Endothelial cell of umbilical vein (primary cell): ENCODE measurements at regions of chr1 and their contacts with region 1.

Region 1: GRCh38 chr1:23809751-23810171 is 9.2 kb upstream of the GALE start:
- DNase-seq: peak; percentile 74
- H3K4me3 ChIP-seq: no peak overlapping the region
- H3K27ac ChIP-seq: no peak overlapping the region
- H3K4me1 ChIP-seq: no peaks in the 10 kb centered on the region
- H3K27me3 ChIP-seq: no peaks in the 10 kb centered on the region
- CTCF ChIP-seq: peak; percentile 88 to 91
- POLR2A ChIP-seq: no peak

Region 2: GRCh38 chr1:23751050-23751814 is 58.5 kb before region 1 on chr1:
- CTCF ChIA-PET with region 1: no interaction called
- POLR2A ChIA-PET with region 1: no interaction called
- dilution Hi-C with region 1: no loop called
- intact Hi-C with region 1: no loop called
- DNase-seq: peak; percentile 46
- H3K4me3 ChIP-seq: no peak overlapping the region
- H3K27ac ChIP-seq: no peak overlapping the region
- H3K4me1 ChIP-seq: no peaks in the 10 kb centered on the region
- H3K27me3 ChIP-seq: no peaks in the 10 kb centered on the region
- CTCF ChIP-seq: peak; percentile 63 to 80
- POLR2A ChIP-seq: no peak

Region 3: DNA sequence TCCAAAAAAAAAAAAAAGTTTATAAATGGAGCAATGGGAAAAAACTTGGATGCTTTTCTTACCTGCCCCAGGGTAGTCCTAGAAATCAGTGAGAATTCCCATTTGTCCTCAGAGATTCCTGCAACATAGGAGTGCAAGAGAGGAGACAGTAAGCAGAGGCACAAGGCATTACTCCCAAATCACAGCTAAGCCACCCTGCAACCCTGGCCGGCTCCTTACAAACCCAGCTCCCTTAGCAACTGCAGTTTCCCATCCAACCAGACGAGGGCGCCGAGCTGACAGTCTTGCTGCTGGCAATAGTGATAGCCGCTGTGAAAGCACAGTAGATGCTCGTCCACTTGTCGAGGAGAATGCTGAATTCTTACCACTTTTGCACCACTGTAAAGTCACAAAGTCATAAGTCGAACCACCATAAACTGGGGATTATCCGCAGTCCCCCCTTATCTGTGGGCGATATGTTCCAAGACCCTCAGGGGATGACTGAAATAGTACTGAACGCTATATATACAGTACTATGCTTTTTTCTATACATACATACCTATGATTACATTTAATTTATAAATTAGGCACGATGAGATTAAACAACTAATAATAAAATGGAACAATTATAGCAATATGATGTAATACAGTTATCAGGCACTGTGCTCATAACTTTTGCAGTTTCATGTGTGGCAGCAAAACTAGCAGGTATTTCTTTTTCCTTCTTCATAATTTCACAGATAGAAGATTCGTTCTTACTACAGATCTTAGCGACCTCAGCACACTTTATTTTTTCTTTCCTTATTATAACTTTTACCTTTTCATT is 37.5 kb before region 1 on chr1:
- CTCF ChIA-PET with region 1: interaction called, 28 read pairs
- POLR2A ChIA-PET with region 1: no interaction called
- dilution Hi-C with region 1: no loop called
- intact Hi-C with region 1: no loop called
- DNase-seq: peak; percentile 81
- H3K4me3 ChIP-seq: no peak overlapping the region
- H3K27ac ChIP-seq: no peak overlapping the region
- H3K4me1 ChIP-seq: peaks cover 2% of the 10 kb centered on the region
- H3K27me3 ChIP-seq: no peaks in the 10 kb centered on the region
- CTCF ChIP-seq: peak; percentile 94 to 97
- POLR2A ChIP-seq: no peak

Region 4: GRCh38 chr1:23825076-23825761 is 15.5 kb after region 1 on chr1 and contains the start of gene HMGCL:
- CTCF ChIA-PET with region 1: interaction called, 23 read pairs
- POLR2A ChIA-PET with region 1: interaction called, 4 read pairs
- dilution Hi-C with region 1: no loop called
- intact Hi-C with region 1: loop called (anchors 1 kb)
- DNase-seq: peak; percentile 91
- H3K4me3 ChIP-seq: peak within 1 kb of the TSS; percentile 91 to 99 (median 99)
- H3K27ac ChIP-seq: peak within 1 kb of the TSS; percentile 76
- H3K4me1 ChIP-seq: peaks cover 9% of the 10 kb centered on the region
- H3K27me3 ChIP-seq: no peaks in the 10 kb centered on the region
- CTCF ChIP-seq: no peak
- POLR2A ChIP-seq: peak; percentile 95
- total RNA-seq, gene HMGCL: 23.9 and 24.2 TPM in 2 replicates

Region 5: DNA sequence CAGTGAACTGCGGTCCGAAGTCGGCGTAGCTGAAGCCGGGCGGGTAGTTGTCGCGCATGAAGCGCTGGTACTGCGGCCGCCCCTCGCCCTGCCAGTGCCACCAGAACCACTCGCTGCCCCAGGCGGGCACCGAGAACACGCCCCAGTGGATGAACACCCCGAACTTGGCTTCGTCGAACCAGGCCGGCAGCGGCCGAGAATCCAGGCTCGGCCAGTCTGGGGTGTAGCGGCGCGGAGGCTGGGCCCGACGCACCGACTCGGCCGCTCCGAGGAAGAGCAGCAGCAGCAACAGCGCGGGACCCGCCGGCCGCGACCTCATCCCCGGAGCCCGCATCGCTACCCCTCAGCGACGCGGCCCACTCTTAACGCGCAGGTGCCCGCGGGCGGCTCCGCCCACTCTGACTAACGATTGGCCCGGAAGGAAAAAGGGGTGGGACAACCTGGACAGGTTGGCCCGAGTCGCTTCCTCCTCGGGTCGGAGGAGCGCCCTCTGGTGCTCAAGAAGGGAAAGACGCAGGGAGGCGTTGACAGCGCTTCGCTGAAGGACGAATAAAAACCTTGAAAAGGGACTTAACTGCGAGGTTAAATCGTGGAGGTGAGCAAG is 58.3 kb after region 1 on chr1 and contains the start of gene FUCA1:
- CTCF ChIA-PET with region 1: interaction called, 8 read pairs
- POLR2A ChIA-PET with region 1: no interaction called
- dilution Hi-C with region 1: no loop called
- intact Hi-C with region 1: loop called (anchors 1 kb)
- DNase-seq: peak; percentile 90
- H3K4me3 ChIP-seq: peak within 1 kb of the TSS; percentile 49 to 61 (median 52)
- H3K27ac ChIP-seq: no peak within 1 kb of the TSS
- H3K4me1 ChIP-seq: peaks cover 4% of the 10 kb centered on the region
- H3K27me3 ChIP-seq: peaks cover 4 to 10% of the 10 kb centered on the region in 2 experiments
- CTCF ChIP-seq: peak; percentile 91 to 95
- POLR2A ChIP-seq: no peak
- total RNA-seq, gene FUCA1: 4.3 and 4.9 TPM in 2 replicates

Region 6: DNA sequence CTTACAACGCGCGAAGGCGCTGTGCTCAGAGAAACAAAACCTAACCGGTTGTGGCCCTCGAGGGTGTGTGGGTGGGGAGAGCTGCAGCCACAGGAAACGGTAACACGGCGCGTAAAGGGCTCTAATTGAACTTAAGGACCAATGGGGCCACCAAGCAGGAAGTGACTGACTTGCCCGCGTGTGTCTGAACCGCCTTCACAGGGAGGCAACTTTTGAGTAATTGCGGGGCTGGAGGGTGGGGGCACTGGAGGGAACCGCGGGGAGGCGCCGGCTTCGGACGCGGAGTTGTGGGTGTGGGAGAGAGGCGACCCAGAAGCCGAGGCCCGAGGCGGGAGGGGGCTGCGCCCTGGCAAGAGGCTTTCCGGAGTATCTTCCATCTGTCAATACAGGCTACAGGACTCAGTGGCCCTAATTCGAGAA is 149.3 kb after region 1 on chr1:
- CTCF ChIA-PET with region 1: no interaction called
- POLR2A ChIA-PET with region 1: no interaction called
- dilution Hi-C with region 1: no loop called
- intact Hi-C with region 1: loop called (anchors 1 kb)
- DNase-seq: peak; percentile 93
- H3K4me3 ChIP-seq: peak overlapping the region; percentile 43 to 67 (median 58)
- H3K27ac ChIP-seq: peak overlapping the region; percentile 96
- H3K4me1 ChIP-seq: peaks cover 26% of the 10 kb centered on the region
- H3K27me3 ChIP-seq: no peaks in the 10 kb centered on the region
- CTCF ChIP-seq: peak; percentile 17 to 38
- POLR2A ChIP-seq: peak; percentile 13

Region 7: GRCh38 chr1:24111996-24112779 is 302.4 kb after region 1 on chr1 and contains the start of gene MYOM3:
- CTCF ChIA-PET with region 1: no interaction called
- POLR2A ChIA-PET with region 1: no interaction called
- dilution Hi-C with region 1: no loop called
- intact Hi-C with region 1: loop called (anchors 1 kb)
- DNase-seq: peak; percentile 63
- H3K4me3 ChIP-seq: no peak within 1 kb of the TSS
- H3K27ac ChIP-seq: no peak within 1 kb of the TSS
- H3K4me1 ChIP-seq: peaks cover 25% of the 10 kb centered on the region
- H3K27me3 ChIP-seq: peaks cover 0 to 2% of the 10 kb centered on the region in 2 experiments
- CTCF ChIP-seq: peak; percentile 32 to 60
- POLR2A ChIP-seq: no peak
- total RNA-seq, gene MYOM3: 0.18 and 0.40 TPM in 2 replicates